OCI-LY7 (cell line): ENCODE measurements at regions of chr12 and their contacts with region 1.

Region 1: DNA sequence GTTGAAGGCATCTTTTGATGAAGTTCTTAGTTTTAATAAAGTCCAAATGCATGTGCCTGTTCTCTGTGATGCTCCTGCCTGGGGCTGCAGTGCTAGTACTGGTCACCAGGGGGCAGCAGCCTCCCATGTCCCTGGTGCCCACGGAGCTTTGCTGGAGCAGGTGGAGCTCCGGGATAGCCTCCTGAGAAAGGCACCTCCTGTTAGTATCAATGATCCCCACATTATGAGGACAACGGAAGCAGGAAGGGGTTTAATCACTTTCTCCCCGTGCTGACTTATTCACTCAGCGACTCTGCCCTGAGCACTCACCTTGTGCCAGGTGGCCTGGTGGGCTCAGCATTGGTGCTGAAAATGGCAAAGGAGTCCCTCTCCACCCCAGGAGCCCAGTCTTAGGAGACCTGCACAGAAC is 123.0 kb upstream of the PZP start:
- DNase-seq: peak; percentile 62
- H3K4me3 ChIP-seq: no peak overlapping the region
- H3K27ac ChIP-seq: no peak overlapping the region
- H3K4me1 ChIP-seq: no peaks in the 10 kb centered on the region
- CTCF ChIP-seq: peak; percentile 100

Region 2: DNA sequence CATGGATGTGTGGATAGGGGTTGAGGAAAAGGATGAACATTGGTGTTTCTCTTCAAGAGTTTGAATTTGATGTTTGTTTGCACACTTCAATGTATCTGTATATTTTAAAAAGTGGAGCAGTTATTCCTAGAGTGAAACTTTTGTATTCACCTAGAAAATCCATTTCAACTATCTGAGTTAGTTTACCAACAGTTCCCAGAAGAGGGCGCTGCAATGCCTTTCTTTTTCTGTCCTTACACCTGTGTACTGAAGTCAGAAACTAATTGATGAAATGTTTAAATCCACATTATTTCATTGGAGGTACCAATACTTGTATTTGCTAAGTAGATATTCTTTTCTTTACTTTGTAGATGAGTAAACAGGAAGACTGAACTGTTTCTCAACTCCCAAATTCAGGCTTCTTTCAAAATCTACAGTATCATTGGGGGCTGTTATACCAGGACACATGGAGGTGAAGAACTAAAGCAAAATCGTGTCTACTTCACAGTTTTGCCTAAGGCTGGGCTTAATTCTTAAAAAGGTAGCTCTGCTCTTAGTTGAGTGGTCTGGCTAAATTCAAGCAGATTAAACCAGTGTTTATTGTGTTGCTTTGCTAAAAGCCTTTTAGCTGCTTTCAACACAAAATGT is 303.1 kb after region 1 on chr12:
- CTCF ChIA-PET with region 1: no interaction called
- POLR2A ChIA-PET with region 1: no interaction called
- intact Hi-C with region 1: loop called (anchors 1 kb)
- DNase-seq: peak; percentile 83
- H3K4me3 ChIP-seq: no peak overlapping the region
- H3K27ac ChIP-seq: peak overlapping the region; percentile 22
- H3K4me1 ChIP-seq: peaks cover 32% of the 10 kb centered on the region
- CTCF ChIP-seq: peak; percentile 100